Calu3 (cell line): ENCODE measurements at regions of chr1 and their contacts with region 1.

Region 1: DNA sequence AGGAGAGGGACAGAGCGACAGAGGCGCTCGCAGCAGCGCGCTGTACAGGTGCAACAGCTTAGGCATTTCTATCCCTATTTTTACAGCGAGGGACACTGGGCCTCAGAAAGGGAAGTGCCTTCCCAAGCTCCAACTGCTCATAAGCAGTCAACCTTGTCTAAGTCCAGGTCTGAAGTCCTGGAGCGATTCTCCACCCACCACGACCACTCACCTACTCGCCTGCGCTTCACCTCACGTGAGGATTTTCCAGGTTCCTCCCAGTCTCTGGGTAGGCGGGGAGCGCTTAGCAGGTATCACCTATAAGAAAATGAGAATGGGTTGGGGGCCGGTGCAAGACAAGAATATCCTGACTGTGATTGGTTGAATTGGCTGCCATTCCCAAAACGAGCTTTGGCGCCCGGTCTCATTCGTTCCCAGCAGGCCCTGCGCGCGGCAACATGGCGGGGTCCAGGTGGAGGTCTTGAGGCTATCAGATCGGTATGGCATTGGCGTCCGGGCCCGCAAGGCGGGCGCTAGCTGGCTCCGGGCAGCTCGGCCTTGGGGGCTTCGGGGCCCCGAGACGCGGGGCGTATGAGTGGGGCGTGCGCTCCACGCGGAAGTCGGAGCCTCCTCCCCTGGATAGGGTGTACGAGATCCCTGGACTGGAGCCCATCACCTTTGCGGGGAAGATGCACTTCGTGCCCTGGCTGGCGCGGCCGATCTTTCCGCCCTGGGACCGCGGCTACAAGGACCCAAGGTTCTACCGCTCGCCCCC is at the starts of genes CYB5RL and MRPL37:
- DNase-seq: peak; percentile 94
- H3K4me3 Mint-ChIP-seq: peak within 1 kb of the TSS; percentile 96
- H3K27ac Mint-ChIP-seq: peak within 1 kb of the TSS; percentile 77
- H3K4me1 Mint-ChIP-seq: peaks cover 27% of the 10 kb centered on the region
- H3K27me3 Mint-ChIP-seq: no peaks in the 10 kb centered on the region
- CTCF ChIP-seq: no peak
- total RNA-seq, gene CYB5RL: 12.9 and 14.5 TPM in 2 replicates
- total RNA-seq, gene MRPL37: 94.2 and 105 TPM in 2 replicates

Region 2: DNA sequence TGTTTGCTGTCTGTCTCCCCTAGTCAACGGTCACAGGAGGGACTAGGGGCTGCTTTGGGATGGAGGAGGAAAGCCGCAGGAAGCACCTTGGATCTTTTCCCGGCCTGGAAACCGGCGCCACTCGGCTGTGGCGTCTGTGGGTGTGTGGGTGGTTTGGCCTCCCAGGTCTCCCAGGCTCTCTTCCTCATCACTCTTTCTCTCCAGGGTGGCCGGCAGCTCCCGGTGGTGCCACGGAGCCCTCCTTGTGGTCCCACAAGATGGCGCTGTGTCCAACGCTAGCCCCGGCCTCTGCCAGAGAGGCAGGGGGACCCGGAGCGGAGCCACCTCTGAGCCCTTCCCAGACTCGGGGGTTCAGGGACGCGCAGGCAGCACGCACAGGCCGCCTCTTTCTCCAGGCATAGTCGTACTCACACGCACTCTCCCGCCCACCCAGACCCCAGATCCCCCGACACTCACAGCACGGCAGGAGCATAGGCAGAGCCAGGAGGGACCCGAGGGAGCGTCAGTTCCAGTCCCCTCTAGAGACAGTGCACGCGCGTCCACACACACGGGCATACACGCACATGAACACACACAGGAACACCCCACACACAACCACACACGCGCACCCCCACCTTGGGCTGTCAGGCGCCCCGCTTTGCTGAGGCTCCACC is 78.3 kb before region 1 on chr1:
- CTCF ChIA-PET with region 1: interaction called, 4 read pairs
- intact Hi-C with region 1: loop called (anchors 5 kb)
- DNase-seq: peak; percentile 84
- H3K4me3 Mint-ChIP-seq: no peak overlapping the region
- H3K27ac Mint-ChIP-seq: peak overlapping the region; percentile 29
- H3K4me1 Mint-ChIP-seq: peaks cover 7% of the 10 kb centered on the region
- H3K27me3 Mint-ChIP-seq: no peaks in the 10 kb centered on the region
- CTCF ChIP-seq: peak; percentile 81

Region 3: GRCh38 chr1:54413732-54414131 is 213.8 kb after region 1 on chr1:
- CTCF ChIA-PET with region 1: interaction called, 10 read pairs
- intact Hi-C with region 1: no loop called
- DNase-seq: no peak
- H3K4me3 Mint-ChIP-seq: no peak overlapping the region
- H3K27ac Mint-ChIP-seq: no peak overlapping the region
- H3K4me1 Mint-ChIP-seq: peaks cover 13% of the 10 kb centered on the region
- H3K27me3 Mint-ChIP-seq: peaks cover 51% of the 10 kb centered on the region
- CTCF ChIP-seq: no peak